MCF 10A (cell line): ENCODE measurements at regions of chr7 and their contacts with region 1.

Region 1: GRCh38 chr7:100101016-100101862 is at the starts of genes AP4M1 and MCM7:
- DNase-seq: peak; percentile 99
- H3K4me3 Mint-ChIP-seq: peak within 1 kb of the TSS; percentile 98
- H3K27ac Mint-ChIP-seq: peak within 1 kb of the TSS; percentile 99
- H3K4me1 Mint-ChIP-seq: peaks cover 32% of the 10 kb centered on the region
- H3K27me3 Mint-ChIP-seq: no peaks in the 10 kb centered on the region
- CTCF ChIP-seq: no peak
- total RNA-seq, gene AP4M1: 13.5 and 13.6 TPM in 2 replicates
- total RNA-seq, gene MCM7: 38.5 and 67.8 TPM in 2 replicates

Region 2: GRCh38 chr7:99588868-99589267 is 512.4 kb before region 1 on chr7:
- CTCF ChIA-PET with region 1: no interaction called
- POLR2A ChIA-PET with region 1: no interaction called
- intact Hi-C with region 1: no loop called
- DNase-seq: no peak
- H3K4me3 Mint-ChIP-seq: no peak overlapping the region
- H3K27ac Mint-ChIP-seq: no peak overlapping the region
- H3K4me1 Mint-ChIP-seq: no peaks in the 10 kb centered on the region
- H3K27me3 Mint-ChIP-seq: no peaks in the 10 kb centered on the region
- CTCF ChIP-seq: no peak

Region 3: GRCh38 chr7:100015232-100016209 is 85.7 kb before region 1 on chr7 and contains the start of gene ZKSCAN1:
- CTCF ChIA-PET with region 1: no interaction called
- POLR2A ChIA-PET with region 1: interaction called, 13 read pairs
- intact Hi-C with region 1: no loop called
- DNase-seq: peak; percentile 95
- H3K4me3 Mint-ChIP-seq: peak within 1 kb of the TSS; percentile 80
- H3K27ac Mint-ChIP-seq: peak within 1 kb of the TSS; percentile 76
- H3K4me1 Mint-ChIP-seq: peaks cover 12% of the 10 kb centered on the region
- H3K27me3 Mint-ChIP-seq: no peaks in the 10 kb centered on the region
- CTCF ChIP-seq: no peak
- total RNA-seq, gene ZKSCAN1: 80.2 and 86.2 TPM in 2 replicates

Region 4: DNA sequence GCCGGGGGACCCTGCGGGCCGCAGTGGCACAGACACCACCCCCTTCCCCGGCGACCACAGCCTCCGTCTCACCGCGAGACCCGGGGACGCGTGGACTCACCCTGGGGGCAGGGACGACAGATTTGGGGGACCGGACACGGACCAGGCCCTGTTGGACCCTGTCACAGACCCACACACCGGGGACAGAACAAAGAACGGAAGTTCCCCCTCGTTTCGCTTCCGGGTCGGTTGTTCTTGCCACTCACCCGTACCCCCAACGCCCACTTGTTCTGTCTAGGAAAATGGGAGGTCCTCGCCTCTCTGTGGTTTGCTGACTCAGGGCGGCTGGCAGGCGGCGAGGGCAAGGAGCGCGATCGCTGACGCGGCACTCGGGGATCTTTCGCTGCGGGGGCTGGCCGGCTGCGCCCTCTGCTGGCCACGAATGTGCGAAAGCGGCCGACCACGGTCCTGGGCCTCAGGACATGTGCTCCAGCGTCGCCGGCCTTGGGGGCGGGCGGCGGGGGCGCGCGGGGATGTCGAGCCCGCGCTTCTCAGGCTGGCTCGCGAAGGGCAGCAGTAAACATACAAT is 19.6 kb before region 1 on chr7 and contains the start of gene ZNF3:
- CTCF ChIA-PET with region 1: interaction called, 4 read pairs
- POLR2A ChIA-PET with region 1: interaction called, 14 read pairs
- intact Hi-C with region 1: loop called (anchors 2 kb)
- DNase-seq: peak; percentile 99
- H3K4me3 Mint-ChIP-seq: peak within 1 kb of the TSS; percentile 84
- H3K27ac Mint-ChIP-seq: peak within 1 kb of the TSS; percentile 74
- H3K4me1 Mint-ChIP-seq: peaks cover 6% of the 10 kb centered on the region
- H3K27me3 Mint-ChIP-seq: no peaks in the 10 kb centered on the region
- CTCF ChIP-seq: peak; percentile 82
- total RNA-seq, gene ZNF3: 23.7 and 24.8 TPM in 2 replicates

Region 5: GRCh38 chr7:100088621-100089457 is 12.4 kb before region 1 on chr7 and contains the start of gene COPS6:
- CTCF ChIA-PET with region 1: interaction called, 4 read pairs
- POLR2A ChIA-PET with region 1: interaction called, 92 read pairs
- intact Hi-C with region 1: loop called (anchors 1 kb)
- DNase-seq: peak; percentile 72
- H3K4me3 Mint-ChIP-seq: peak within 1 kb of the TSS; percentile 92
- H3K27ac Mint-ChIP-seq: peak within 1 kb of the TSS; percentile 76
- H3K4me1 Mint-ChIP-seq: peaks cover 18% of the 10 kb centered on the region
- H3K27me3 Mint-ChIP-seq: no peaks in the 10 kb centered on the region
- CTCF ChIP-seq: no peak
- total RNA-seq, gene COPS6: 85.2 and 103 TPM in 2 replicates

Region 6: DNA sequence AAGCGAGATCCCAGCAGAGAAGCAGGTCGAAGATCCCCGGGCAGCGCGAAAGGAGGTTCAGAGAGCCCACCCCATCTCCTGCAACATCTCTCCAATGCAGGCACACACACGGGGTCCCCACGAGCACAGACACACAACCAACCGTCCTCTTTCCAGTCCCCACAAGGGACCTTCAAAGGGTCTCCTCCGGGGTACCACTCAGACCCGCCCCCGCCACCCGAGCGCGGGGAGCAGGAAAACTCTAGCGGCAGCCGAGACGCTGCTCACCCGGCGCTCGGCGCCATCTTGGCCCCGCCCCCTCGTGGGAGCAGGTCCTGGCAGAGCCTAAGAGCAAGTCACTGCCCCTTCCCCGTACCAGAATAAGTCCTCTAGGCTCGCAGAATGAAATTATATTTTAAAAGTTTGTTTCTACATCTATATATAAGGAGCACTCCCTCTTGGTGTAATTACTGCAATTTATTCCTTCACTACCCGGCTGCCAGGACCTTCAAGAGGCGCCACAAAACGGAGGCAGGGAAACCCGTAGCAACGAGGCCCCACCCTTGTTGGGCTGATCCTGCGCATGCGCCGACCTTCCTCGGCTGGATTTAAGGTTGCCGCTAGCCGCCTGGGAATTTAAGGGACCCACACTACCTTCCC is 17.9 kb after region 1 on chr7 and contains the starts of genes CNPY4 and TAF6:
- CTCF ChIA-PET with region 1: interaction called, 5 read pairs
- POLR2A ChIA-PET with region 1: interaction called, 47 read pairs
- intact Hi-C with region 1: loop called (anchors 1 kb)
- DNase-seq: peak; percentile 96
- H3K4me3 Mint-ChIP-seq: peak within 1 kb of the TSS; percentile 98
- H3K27ac Mint-ChIP-seq: peak within 1 kb of the TSS; percentile 99
- H3K4me1 Mint-ChIP-seq: peaks cover 7% of the 10 kb centered on the region
- H3K27me3 Mint-ChIP-seq: no peaks in the 10 kb centered on the region
- CTCF ChIP-seq: no peak
- total RNA-seq, gene CNPY4: 2.9 and 3.0 TPM in 2 replicates
- total RNA-seq, gene TAF6: 47.2 and 58.9 TPM in 2 replicates

Region 7: GRCh38 chr7:100126931-100127865 is 26.0 kb after region 1 on chr7 and contains the start of gene MBLAC1:
- CTCF ChIA-PET with region 1: interaction called, 16 read pairs
- POLR2A ChIA-PET with region 1: interaction called, 47 read pairs
- intact Hi-C with region 1: no loop called
- DNase-seq: peak; percentile 89
- H3K4me3 Mint-ChIP-seq: peak within 1 kb of the TSS; percentile 98
- H3K27ac Mint-ChIP-seq: peak within 1 kb of the TSS; percentile 99
- H3K4me1 Mint-ChIP-seq: peaks cover 11% of the 10 kb centered on the region
- H3K27me3 Mint-ChIP-seq: no peaks in the 10 kb centered on the region
- CTCF ChIP-seq: no peak
- total RNA-seq, gene MBLAC1: 2.5 and 3.2 TPM in 2 replicates

Region 8: GRCh38 chr7:100148559-100149350 is 47.5 kb after region 1 on chr7 and contains the start of gene LAMTOR4:
- CTCF ChIA-PET with region 1: no interaction called
- POLR2A ChIA-PET with region 1: interaction called, 16 read pairs
- intact Hi-C with region 1: no loop called
- DNase-seq: peak; percentile 99
- H3K4me3 Mint-ChIP-seq: peak within 1 kb of the TSS; percentile 92
- H3K27ac Mint-ChIP-seq: peak within 1 kb of the TSS; percentile 82
- H3K4me1 Mint-ChIP-seq: peaks cover 14% of the 10 kb centered on the region
- H3K27me3 Mint-ChIP-seq: no peaks in the 10 kb centered on the region
- CTCF ChIP-seq: no peak
- total RNA-seq, gene LAMTOR4: 76.6 and 87.3 TPM in 2 replicates